ENCODE measurements at regions of chr6 and their contacts with region 1.

Region 1: GRCh38 chr6:20952699-20953474 is 418.6 kb downstream of the CDKAL1 start:
- DNase-seq: peak; percentile 95
- H3K4me3 ChIP-seq: peak overlapping the region in 1 of 3 experiments; percentile 55
- H3K27ac ChIP-seq: peak overlapping the region; percentile 94
- H3K4me1 ChIP-seq: peaks cover 14% of the 10 kb centered on the region
- H3K27me3 ChIP-seq: no peaks in the 10 kb centered on the region
- CTCF ChIP-seq: peak; percentile 26 to 50
- POLR2A ChIP-seq: no peak

Region 2: GRCh38 chr6:20236909-20237600 is 715.8 kb before region 1 on chr6:
- CTCF ChIA-PET with region 1: no interaction called
- POLR2A ChIA-PET with region 1: no interaction called
- dilution Hi-C with region 1: no loop called
- intact Hi-C with region 1: no loop called
- DNase-seq: no peak
- H3K4me3 ChIP-seq: no peak overlapping the region
- H3K27ac ChIP-seq: no peak overlapping the region
- H3K4me1 ChIP-seq: no peaks in the 10 kb centered on the region
- H3K27me3 ChIP-seq: no peaks in the 10 kb centered on the region
- CTCF ChIP-seq: no peak
- POLR2A ChIP-seq: no peak

Region 3: GRCh38 chr6:20564269-20564668 is 388.6 kb before region 1 on chr6:
- CTCF ChIA-PET with region 1: interaction called, 3 read pairs
- POLR2A ChIA-PET with region 1: no interaction called
- dilution Hi-C with region 1: no loop called
- intact Hi-C with region 1: loop called (anchors 2 kb)
- DNase-seq: peak; percentile 59
- H3K4me3 ChIP-seq: peak overlapping the region in 1 of 3 experiments; percentile 28
- H3K27ac ChIP-seq: peak overlapping the region; percentile 32
- H3K4me1 ChIP-seq: peaks cover 12% of the 10 kb centered on the region
- H3K27me3 ChIP-seq: no peaks in the 10 kb centered on the region
- CTCF ChIP-seq: peak; percentile 16 to 33
- POLR2A ChIP-seq: no peak

Region 4: GRCh38 chr6:20868397-20869096 is 84.3 kb before region 1 on chr6:
- CTCF ChIA-PET with region 1: no interaction called
- POLR2A ChIA-PET with region 1: no interaction called
- dilution Hi-C with region 1: no loop called
- intact Hi-C with region 1: no loop called
- DNase-seq: no peak
- H3K4me3 ChIP-seq: no peak overlapping the region
- H3K27ac ChIP-seq: no peak overlapping the region
- H3K4me1 ChIP-seq: no peaks in the 10 kb centered on the region
- H3K27me3 ChIP-seq: no peaks in the 10 kb centered on the region
- CTCF ChIP-seq: no peak
- POLR2A ChIP-seq: no peak

Region 5: GRCh38 chr6:20906938-20907337 is 45.9 kb before region 1 on chr6:
- CTCF ChIA-PET with region 1: no interaction called
- POLR2A ChIA-PET with region 1: no interaction called
- dilution Hi-C with region 1: no loop called
- intact Hi-C with region 1: no loop called
- DNase-seq: no peak
- H3K4me3 ChIP-seq: no peak overlapping the region
- H3K27ac ChIP-seq: no peak overlapping the region
- H3K4me1 ChIP-seq: peaks cover 8% of the 10 kb centered on the region
- H3K27me3 ChIP-seq: no peaks in the 10 kb centered on the region
- CTCF ChIP-seq: no peak
- POLR2A ChIP-seq: no peak

Region 6: DNA sequence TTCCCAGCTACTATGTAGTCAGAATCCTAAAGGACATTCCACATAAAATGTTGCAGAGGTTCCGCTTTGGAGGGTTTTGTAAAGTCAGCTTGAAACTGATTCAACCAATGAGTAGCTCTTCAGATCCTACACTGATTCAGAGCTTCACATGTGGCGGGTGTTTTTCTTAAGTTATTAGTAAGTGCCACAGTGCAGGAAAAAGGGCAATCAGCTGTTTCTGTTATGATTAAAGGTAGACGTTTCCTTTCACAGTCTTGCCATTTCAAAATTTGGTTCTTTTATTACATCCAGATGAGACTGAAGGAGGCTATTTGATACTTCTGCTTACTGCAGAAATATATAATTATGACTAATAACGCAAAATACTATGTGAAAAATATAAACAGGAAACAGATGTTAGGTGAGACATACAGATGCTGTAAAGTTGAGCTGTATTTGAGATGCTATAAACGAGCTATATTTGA is 25.3 kb after region 1 on chr6:
- CTCF ChIA-PET with region 1: no interaction called
- POLR2A ChIA-PET with region 1: no interaction called
- dilution Hi-C with region 1: no loop called
- intact Hi-C with region 1: loop called (anchors 1 kb)
- DNase-seq: peak; percentile 93
- H3K4me3 ChIP-seq: no peak overlapping the region
- H3K27ac ChIP-seq: peak overlapping the region; percentile 40
- H3K4me1 ChIP-seq: peaks cover 18% of the 10 kb centered on the region
- H3K27me3 ChIP-seq: no peaks in the 10 kb centered on the region
- CTCF ChIP-seq: no peak
- POLR2A ChIP-seq: no peak

Region 7: DNA sequence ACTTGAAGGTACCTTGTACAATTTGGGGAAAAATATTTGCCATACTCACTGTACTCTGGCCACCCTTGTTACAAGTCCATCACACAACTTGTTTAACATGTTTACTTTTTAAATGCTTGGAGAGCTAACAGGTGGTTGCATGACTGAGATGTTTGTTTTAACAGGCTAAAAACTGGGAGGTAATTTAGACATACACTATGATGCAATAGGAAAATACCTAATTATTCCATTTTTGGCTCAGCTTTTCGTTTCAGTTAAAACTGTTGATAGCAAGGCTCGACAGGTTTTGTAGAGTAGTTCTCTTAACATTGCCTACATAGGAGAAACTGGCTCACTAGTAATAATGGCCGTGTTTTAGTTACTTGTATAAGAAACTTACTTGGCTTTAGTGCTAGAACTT is 150.8 kb after region 1 on chr6:
- CTCF ChIA-PET with region 1: no interaction called
- POLR2A ChIA-PET with region 1: no interaction called
- dilution Hi-C with region 1: no loop called
- intact Hi-C with region 1: no loop called
- DNase-seq: no peak
- H3K4me3 ChIP-seq: no peak overlapping the region
- H3K27ac ChIP-seq: no peak overlapping the region
- H3K4me1 ChIP-seq: peaks cover 2% of the 10 kb centered on the region
- H3K27me3 ChIP-seq: no peaks in the 10 kb centered on the region
- CTCF ChIP-seq: no peak
- POLR2A ChIP-seq: no peak

Region 8: GRCh38 chr6:21188505-21189223 is 235.8 kb after region 1 on chr6:
- CTCF ChIA-PET with region 1: interaction called, 3 read pairs
- POLR2A ChIA-PET with region 1: no interaction called
- dilution Hi-C with region 1: no loop called
- intact Hi-C with region 1: loop called (anchors 5 kb)
- DNase-seq: peak; percentile 64
- H3K4me3 ChIP-seq: no peak overlapping the region
- H3K27ac ChIP-seq: peak overlapping the region; percentile 71
- H3K4me1 ChIP-seq: peaks cover 35% of the 10 kb centered on the region
- H3K27me3 ChIP-seq: no peaks in the 10 kb centered on the region
- CTCF ChIP-seq: no peak
- POLR2A ChIP-seq: no peak

Region 9: DNA sequence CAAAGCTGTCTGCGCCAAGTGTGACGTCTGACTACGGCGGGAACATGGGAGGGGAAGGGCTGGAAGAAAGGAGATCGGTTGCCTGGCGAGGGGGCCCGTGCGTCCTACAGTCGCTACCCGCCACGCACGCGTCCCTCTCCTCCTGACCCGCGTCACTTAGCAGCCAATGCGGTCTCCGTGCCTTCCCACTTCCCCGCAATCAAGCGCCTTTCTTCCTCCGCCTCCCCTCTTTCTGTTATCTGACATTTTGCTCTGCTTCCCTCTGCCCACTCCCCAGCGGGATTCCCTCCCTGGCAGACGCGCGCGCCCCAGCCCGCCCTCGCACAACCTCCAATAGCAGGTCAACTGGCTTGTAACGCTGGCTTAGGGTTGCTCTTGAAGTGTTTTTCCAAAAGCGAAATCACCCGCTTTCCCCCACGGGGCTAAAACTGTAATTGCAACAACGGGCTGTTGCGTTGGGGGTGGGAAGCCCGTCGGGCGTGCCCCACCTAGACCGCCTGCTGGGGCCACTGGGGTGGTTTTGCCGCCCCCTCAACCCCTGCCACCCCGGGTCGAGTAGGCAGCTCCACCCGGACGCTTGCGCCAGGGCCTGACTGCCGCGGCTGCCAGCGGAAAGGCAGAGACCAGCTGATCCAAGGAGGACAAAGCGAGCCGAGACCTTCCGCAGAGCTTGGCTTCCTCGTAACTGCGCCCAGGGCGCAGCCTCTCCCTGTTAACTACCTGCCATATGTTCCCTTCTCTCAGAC is 634.5 kb after region 1 on chr6:
- CTCF ChIA-PET with region 1: interaction called, 8 read pairs
- POLR2A ChIA-PET with region 1: no interaction called
- dilution Hi-C with region 1: no loop called
- intact Hi-C with region 1: loop called (anchors 1 kb)
- DNase-seq: peak; percentile 78
- H3K4me3 ChIP-seq: peak overlapping the region; percentile 33 to 65 (median 46)
- H3K27ac ChIP-seq: peak overlapping the region; percentile 71
- H3K4me1 ChIP-seq: peaks cover 17% of the 10 kb centered on the region
- H3K27me3 ChIP-seq: no peaks in the 10 kb centered on the region
- CTCF ChIP-seq: peak in 1 of 2 donors; percentile 50
- POLR2A ChIP-seq: no peak

Measured in endothelial cell of umbilical vein (primary cell).